Colonic mucosa (tissue), 4 donors: ENCODE measurements at regions of chr19 and their contacts with region 1.

Region 1: DNA sequence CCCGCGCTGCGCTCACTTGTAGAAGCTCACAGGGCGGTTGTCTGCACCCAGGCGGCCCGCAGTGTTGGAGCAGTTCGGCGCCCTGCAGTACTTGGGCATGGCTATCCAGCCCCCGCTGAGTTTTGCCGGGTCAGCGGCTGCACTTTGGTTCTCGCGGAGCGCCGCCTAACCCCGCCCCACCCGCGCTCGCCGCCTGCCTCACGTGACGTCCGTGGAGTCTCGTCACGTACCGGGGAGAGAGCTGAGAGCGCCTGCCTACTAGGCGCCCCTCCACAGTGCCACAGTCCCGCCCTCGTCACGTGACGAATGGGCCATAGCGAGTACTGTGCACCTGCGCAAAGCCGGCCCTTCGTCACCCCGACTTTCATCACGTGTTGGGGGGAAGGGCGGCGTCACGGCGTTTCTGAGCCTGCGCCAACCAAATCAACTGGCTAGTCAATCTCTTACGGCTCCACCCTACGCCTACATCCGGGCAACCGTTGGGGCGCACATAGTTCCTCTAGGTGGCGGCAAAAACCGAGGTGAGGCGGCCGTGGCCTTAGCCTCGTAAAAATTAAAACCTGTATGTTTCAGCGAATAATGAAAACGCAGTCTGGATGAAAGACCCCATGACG is at the start of gene THAP8:
- DNase-seq: peak; percentile 100
- H3K4me3 ChIP-seq: peak within 1 kb of the TSS; percentile 70
- H3K27ac ChIP-seq: peak within 1 kb of the TSS; percentile 95
- H3K4me1 ChIP-seq: peaks cover 5% of the 10 kb centered on the region
- H3K27me3 ChIP-seq: no peaks in the 10 kb centered on the region
- CTCF ChIP-seq: peak; percentile 10
- total RNA-seq, gene THAP8: 3.3 to 4.6 TPM

Region 2: GRCh38 chr19:35828692-35829301 is 225.4 kb before region 1 on chr19:
- intact Hi-C with region 1: no loop called
- DNase-seq: peak; percentile 53
- H3K4me3 ChIP-seq: no peak overlapping the region
- H3K27ac ChIP-seq: no peak overlapping the region
- H3K4me1 ChIP-seq: no peaks in the 10 kb centered on the region
- H3K27me3 ChIP-seq: no peaks in the 10 kb centered on the region
- CTCF ChIP-seq: no peak

Region 3: GRCh38 chr19:35995048-35995993 is 58.9 kb before region 1 on chr19 and contains the start of gene SDHAF1:
- intact Hi-C with region 1: loop called (anchors 10 kb)
- DNase-seq: peak; percentile 98
- H3K4me3 ChIP-seq: peak within 1 kb of the TSS; percentile 76
- H3K27ac ChIP-seq: peak within 1 kb of the TSS; percentile 90
- H3K4me1 ChIP-seq: no peaks in the 10 kb centered on the region
- H3K27me3 ChIP-seq: no peaks in the 10 kb centered on the region
- CTCF ChIP-seq: no peak
- total RNA-seq, gene SDHAF1: 25.2 to 31.6 TPM

Region 4: DNA sequence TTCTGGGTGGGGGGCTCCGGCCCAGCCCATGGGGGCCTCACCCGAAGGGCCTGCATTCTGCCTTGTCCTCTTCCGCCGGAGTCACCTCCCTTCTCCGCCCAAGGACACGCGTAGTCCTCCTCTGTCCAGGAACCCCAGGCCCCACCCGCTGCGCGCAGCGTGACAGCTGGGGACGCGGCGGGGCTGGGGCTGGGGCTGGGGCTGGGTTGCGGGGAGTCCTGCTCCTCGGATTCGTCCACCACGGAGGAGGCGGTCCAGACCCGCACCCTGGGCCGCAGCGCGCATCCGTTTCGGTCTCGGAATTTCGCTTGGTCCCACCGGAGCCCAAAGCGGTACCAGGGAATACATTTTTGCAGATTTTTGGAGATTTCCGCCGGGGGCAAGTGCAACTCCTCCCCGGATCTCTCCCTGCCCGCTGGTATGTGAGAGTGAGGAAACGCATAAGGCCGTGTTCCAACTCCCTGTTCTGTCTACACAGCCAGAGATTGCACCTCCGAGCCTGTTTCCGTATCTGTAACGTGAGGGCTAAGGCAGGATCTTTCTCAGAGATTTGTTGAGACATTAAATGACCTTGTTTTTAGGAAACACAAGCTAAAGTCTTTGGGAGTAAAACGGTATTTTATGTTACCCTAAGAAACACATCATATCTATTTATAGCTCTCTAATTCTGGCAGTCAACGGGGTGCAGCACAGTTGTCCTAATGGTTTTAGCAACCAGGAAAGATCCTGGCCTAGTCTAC is 98.3 kb after region 1 on chr19 and contains the start of gene COX7A1:
- intact Hi-C with region 1: no loop called
- DNase-seq: no peak
- H3K4me3 ChIP-seq: peak within 1 kb of the TSS; percentile 22
- H3K27ac ChIP-seq: peak within 1 kb of the TSS; percentile 76
- H3K4me1 ChIP-seq: no peaks in the 10 kb centered on the region
- H3K27me3 ChIP-seq: no peaks in the 10 kb centered on the region
- CTCF ChIP-seq: no peak
- total RNA-seq, gene COX7A1: 8.2 to 17.1 TPM